Dendritic cell treated with granulocyte-macrophage colony-stimulating factor and Interleukin-4, amounts not matched to agents 40 ng/mL and 50 ng/mL, for 4 days (primary cell): ENCODE measurements at regions of chr5 and their contacts with region 1.

Region 1: DNA sequence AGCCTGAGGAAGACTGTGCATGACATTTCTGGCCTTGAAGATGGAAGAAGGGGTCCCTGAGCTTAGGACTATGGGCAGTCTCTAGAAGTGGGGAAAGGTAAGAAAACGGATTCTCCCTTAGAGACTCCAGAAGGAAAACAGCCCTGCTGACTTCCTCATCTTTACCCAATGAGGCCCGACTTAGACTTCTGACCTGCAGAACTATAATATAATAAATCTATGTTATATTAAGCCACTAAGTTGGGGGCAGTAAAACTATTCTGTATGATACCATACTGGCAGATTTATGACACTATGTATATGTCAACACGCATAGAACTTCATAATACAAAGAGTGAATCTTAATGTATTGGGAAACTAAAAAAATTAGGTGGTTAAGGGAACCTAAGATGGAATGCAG is 422.0 kb downstream of the PLK2 start:
- H3K4me3 Mint-ChIP-seq: no peak overlapping the region
- H3K27ac Mint-ChIP-seq: no peak overlapping the region
- H3K4me1 Mint-ChIP-seq: no peaks in the 10 kb centered on the region
- H3K27me3 Mint-ChIP-seq: no peaks in the 10 kb centered on the region

Region 2: GRCh38 chr5:58025809-58026208 is 12.1 kb before region 1 on chr5:
- intact Hi-C with region 1: loop called (anchors 1 kb)
- H3K4me3 Mint-ChIP-seq: no peak overlapping the region
- H3K27ac Mint-ChIP-seq: no peak overlapping the region
- H3K4me1 Mint-ChIP-seq: no peaks in the 10 kb centered on the region
- H3K27me3 Mint-ChIP-seq: no peaks in the 10 kb centered on the region

Region 3: DNA sequence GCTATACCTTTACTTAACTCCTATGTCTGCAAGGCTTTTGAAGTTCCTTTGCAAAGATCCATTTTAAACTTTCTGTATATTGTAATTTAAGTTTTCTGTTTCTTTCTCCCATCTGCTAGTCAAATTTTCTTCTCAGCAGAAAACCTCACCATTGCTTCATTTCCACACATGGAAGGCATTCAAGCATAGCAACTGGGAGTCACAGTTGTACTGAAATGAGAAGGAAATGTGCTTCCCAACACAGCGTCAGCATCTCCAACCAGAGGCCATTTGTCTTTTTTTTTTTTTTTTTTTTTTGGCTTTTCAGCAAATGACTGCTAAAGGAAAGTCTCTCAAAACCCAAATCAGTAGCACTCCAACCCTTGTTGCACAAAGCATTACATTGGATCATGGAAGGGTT is 637.4 kb after region 1 on chr5:
- intact Hi-C with region 1: no loop called
- H3K4me3 Mint-ChIP-seq: no peak overlapping the region
- H3K27ac Mint-ChIP-seq: no peak overlapping the region
- H3K4me1 Mint-ChIP-seq: no peaks in the 10 kb centered on the region
- H3K27me3 Mint-ChIP-seq: no peaks in the 10 kb centered on the region